A549 (cell line): ENCODE measurements at regions of chr18 and their contacts with region 1.

Region 1: DNA sequence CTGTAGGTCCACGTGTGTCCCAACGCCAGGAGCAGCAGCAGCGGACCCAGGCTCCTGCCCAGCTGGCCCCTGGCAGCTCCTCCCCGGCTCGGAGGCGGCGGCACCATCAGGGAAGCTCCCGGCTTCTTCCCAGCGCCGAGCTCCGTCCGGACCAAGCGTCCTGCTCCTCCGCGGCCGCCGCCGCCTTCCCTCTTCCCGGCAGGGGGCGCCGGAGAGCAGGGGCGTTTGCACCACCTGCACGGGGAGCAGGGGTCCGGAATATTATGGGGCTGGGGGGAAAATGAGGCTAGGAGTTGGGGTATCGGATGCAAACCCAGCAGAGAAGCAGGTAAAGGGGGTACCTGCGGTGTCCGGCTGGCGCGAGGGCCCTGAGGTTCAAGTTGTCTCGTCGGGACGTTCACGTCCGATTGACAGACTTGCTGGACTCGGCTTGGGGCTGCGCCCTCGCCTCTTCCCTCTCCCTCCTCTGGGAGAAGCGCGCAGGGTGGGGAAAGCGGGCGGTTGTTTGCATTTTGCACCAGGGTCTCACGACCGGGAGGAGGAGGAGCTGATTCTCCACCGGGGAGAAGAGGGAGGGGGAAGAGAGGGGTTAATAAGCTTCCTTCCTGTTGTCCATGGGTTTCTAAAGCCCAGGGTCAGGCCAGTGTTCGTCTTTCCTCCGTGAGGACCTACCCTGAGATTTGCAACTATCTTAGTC is at the start of gene CCBE1:
- DNase-seq: peak; percentile 42 to 67
- ATAC-seq: peak; percentile 91 to 95
- H3K4me3 ChIP-seq: peak within 1 kb of the TSS; percentile 64
- H3K27ac ChIP-seq: peak within 1 kb of the TSS; percentile 72 to 87
- H3K4me1 ChIP-seq: 0 out of 3 replicates have a peak, but pooled peaks cover 3% of the 10 kb centered on the region
- CTCF ChIP-seq: peak; percentile 83
- EP300 ChIP-seq: no peak
- POLR2A ChIP-seq: no peak
- RAD21 ChIP-seq: peak; percentile 45 to 64
- polyA plus RNA-seq, gene CCBE1: 3.0 and 4.3 TPM in 2 replicates

Region 2: DNA sequence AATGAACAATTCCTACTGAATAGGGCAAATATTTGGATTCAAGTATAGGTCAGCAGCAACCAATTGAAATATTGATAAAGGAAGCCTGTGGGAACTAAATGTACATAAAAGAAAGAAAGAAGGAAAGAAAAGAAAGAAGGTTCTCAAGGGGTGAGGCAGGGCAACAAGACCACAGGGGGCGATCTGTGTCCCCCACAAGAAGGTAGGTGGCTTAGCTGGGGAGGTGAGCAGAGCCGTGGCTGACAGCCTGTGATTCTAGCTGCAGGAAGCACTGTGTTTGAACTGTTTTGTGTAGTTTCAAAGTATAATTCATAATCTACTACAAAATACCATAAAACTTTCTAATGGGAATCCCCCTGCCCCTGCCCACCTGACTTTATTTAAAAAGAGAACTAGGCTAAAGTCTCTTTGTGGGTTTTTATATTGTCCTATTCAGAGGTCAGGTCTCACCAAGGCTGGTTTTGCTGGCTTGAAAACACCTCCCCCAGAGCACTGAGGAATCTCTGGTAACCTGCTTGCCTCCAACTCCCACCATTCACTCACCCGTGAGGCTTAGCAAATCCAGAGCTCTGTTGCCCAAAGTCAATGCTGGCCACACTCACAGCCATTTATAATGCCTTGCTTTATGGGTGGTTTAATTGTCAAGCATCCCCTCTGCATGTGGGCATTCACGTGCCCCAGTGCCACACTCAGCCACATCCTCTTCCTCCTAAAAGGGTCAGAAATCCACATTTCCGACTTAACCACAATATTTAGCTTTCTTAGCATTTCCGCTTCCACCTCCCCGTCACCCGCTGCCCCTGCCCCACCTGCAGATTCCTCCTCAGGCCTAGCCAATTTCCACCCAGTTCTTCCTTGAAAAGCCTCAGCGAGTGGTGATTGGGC is 301.9 kb before region 1 on chr18:
- CTCF ChIA-PET with region 1: no interaction called
- POLR2A ChIA-PET with region 1: no interaction called
- DNase-seq: no peak
- ATAC-seq: no peak
- H3K4me3 ChIP-seq: no peak overlapping the region
- H3K27ac ChIP-seq: no peak overlapping the region
- H3K4me1 ChIP-seq: no peaks in the 10 kb centered on the region
- CTCF ChIP-seq: no peak
- EP300 ChIP-seq: no peak
- POLR2A ChIP-seq: no peak
- RAD21 ChIP-seq: no peak

Region 3: GRCh38 chr18:59650266-59650820 is 47.0 kb before region 1 on chr18:
- CTCF ChIA-PET with region 1: interaction called, 11 read pairs
- POLR2A ChIA-PET with region 1: no interaction called
- DNase-seq: no peak
- ATAC-seq: no peak
- H3K4me3 ChIP-seq: no peak overlapping the region
- H3K27ac ChIP-seq: no peak overlapping the region
- H3K4me1 ChIP-seq: no peaks in the 10 kb centered on the region
- CTCF ChIP-seq: no peak
- EP300 ChIP-seq: no peak
- POLR2A ChIP-seq: no peak
- RAD21 ChIP-seq: no peak

Region 4: DNA sequence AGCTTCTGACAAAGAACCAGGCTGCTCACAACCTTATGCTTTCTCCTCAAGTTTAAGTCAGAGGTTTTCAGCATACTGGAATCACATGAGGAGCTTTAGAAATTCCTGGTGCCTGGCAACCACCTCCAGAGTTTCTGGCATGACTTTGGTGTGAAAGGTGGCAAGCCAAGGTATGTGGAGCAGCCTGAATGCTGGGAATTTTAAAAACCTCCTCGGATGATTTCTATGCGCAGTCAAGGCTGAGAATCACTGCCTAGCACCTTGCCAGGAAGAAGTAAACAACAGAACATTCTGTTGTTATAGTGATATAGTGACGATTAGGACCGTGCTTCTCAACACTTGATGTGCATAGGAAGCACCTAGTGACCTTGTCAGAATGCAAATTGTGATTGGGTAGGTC is 11.9 kb before region 1 on chr18:
- CTCF ChIA-PET with region 1: interaction called, 21 read pairs
- POLR2A ChIA-PET with region 1: no interaction called
- DNase-seq: no peak
- ATAC-seq: no peak
- H3K4me3 ChIP-seq: no peak overlapping the region
- H3K27ac ChIP-seq: no peak overlapping the region
- H3K4me1 ChIP-seq: no peaks in the 10 kb centered on the region
- CTCF ChIP-seq: no peak
- EP300 ChIP-seq: no peak
- POLR2A ChIP-seq: no peak
- RAD21 ChIP-seq: no peak

Region 5: GRCh38 chr18:59725142-59725541 is 27.8 kb after region 1 on chr18:
- CTCF ChIA-PET with region 1: interaction called, 12 read pairs
- POLR2A ChIA-PET with region 1: no interaction called
- DNase-seq: no peak
- ATAC-seq: no peak
- H3K4me3 ChIP-seq: no peak overlapping the region
- H3K27ac ChIP-seq: peak overlapping the region in 1 of 2 experiments; percentile 6; a peak in 1 of 6 replicates
- H3K4me1 ChIP-seq: peaks cover 12% of the 10 kb centered on the region; the same call in 1 of the 3 replicates
- CTCF ChIP-seq: no peak
- EP300 ChIP-seq: no peak
- POLR2A ChIP-seq: no peak
- RAD21 ChIP-seq: no peak

Region 6: DNA sequence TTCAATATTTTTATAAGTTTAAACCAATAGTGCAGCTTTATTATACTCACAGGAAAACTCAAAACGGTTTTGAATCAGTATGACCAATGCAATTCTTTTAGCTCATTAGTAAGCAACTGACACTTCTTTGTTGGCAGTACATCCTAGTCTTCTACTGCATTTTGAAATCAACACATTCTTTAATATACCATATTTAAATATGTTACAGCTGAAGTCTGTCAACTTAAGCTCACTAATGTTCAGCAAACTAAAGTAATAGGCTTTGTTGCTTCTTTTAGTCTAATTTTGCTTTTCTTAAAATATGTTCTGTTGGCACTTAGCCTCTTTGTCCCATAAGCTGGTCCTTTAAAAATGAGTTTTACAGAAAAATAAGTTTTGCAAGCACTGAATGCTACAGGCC is 55.3 kb after region 1 on chr18:
- CTCF ChIA-PET with region 1: interaction called, 12 read pairs
- POLR2A ChIA-PET with region 1: no interaction called
- DNase-seq: no peak
- ATAC-seq: no peak
- H3K4me3 ChIP-seq: no peak overlapping the region
- H3K27ac ChIP-seq: no peak overlapping the region
- H3K4me1 ChIP-seq: peaks cover 15% of the 10 kb centered on the region; the same call in 2 of the 3 replicates
- CTCF ChIP-seq: no peak
- EP300 ChIP-seq: no peak
- POLR2A ChIP-seq: no peak
- RAD21 ChIP-seq: no peak

Region 7: GRCh38 chr18:59814891-59815290 is 117.5 kb after region 1 on chr18:
- CTCF ChIA-PET with region 1: interaction called, 15 read pairs
- POLR2A ChIA-PET with region 1: no interaction called
- DNase-seq: peak in 1 of 2 experiments; percentile 32
- ATAC-seq: peak; percentile 43 to 58; a peak in 3 of 6 replicates
- H3K4me3 ChIP-seq: no peak overlapping the region
- H3K27ac ChIP-seq: peak overlapping the region in 1 of 2 experiments; percentile 17; a peak in 2 of 6 replicates
- H3K4me1 ChIP-seq: no peaks in the 10 kb centered on the region
- CTCF ChIP-seq: no peak
- EP300 ChIP-seq: no peak
- POLR2A ChIP-seq: no peak
- RAD21 ChIP-seq: no peak